Caco-2 (cell line): ENCODE measurements at regions of chr6 and their contacts with region 1.

Region 1: DNA sequence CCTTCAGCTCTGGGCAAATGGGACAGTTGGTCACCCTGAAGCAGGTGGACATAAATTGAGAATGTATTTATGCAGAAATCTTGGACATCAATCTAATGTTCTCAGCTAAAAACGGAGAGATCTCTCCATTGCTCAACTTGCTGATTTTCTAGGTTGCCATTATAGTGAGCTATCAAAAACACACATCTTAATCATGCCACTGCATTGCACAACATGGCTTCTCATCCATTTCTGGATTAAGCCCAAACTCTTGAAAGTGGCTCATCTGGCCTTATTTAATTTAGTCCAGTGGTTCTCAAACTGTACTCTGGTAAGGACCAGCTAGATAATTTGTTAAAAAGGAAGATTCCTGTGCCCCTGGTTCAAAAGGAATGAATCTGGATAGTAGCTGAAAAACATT is 324.9 kb upstream of the CITED2 start:
- DNase-seq: no peak
- H3K4me3 ChIP-seq: no peak overlapping the region
- H3K4me3 Mint-ChIP-seq: no peak overlapping the region
- H3K27ac Mint-ChIP-seq: no peak overlapping the region
- H3K4me1 ChIP-seq: peaks cover 7% of the 10 kb centered on the region
- H3K4me1 Mint-ChIP-seq: peaks cover 7% of the 10 kb centered on the region
- H3K27me3 ChIP-seq: no peaks in the 10 kb centered on the region
- H3K27me3 Mint-ChIP-seq: no peaks in the 10 kb centered on the region
- CTCF ChIP-seq: no peak

Region 2: DNA sequence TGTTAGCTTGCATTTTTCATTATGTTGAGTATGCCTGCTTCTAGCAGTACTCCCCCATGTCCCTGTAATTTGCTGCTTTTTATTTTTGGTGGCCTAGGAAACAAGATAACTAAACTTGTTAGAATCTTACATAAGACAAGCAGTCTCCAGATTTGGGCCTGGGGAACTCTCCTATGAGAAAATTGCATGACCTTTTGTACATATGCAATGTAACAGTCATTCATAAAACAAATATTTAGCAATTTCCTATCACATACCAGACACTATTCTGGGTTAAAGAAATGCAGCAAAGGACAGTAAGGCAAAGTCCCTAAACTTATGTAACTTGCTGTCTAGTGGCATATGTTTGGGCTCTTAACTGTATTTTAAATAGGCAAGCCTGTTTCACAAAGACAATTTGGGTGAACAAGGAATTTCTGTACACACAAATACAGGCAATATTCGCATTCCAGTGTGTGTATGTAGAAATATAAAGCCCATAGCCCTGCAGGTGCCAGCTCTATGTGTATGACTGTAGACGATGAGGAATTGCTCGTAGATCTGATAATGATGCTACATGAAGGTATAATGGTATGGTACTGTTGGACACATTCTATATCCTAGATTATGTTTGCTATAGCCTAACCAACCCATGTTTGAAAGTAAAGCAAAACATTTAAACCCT is 19.7 kb before region 1 on chr6:
- CTCF ChIA-PET with region 1: no interaction called
- POLR2A ChIA-PET with region 1: no interaction called
- intact Hi-C with region 1: loop called (anchors 2 kb)
- DNase-seq: peak in 1 of 2 experiments; percentile 27
- H3K4me3 ChIP-seq: no peak overlapping the region
- H3K4me3 Mint-ChIP-seq: no peak overlapping the region
- H3K27ac Mint-ChIP-seq: peak overlapping the region; percentile 64
- H3K4me1 ChIP-seq: peaks cover 23% of the 10 kb centered on the region
- H3K4me1 Mint-ChIP-seq: peaks cover 6% of the 10 kb centered on the region
- H3K27me3 ChIP-seq: no peaks in the 10 kb centered on the region
- H3K27me3 Mint-ChIP-seq: no peaks in the 10 kb centered on the region
- CTCF ChIP-seq: no peak

Region 3: DNA sequence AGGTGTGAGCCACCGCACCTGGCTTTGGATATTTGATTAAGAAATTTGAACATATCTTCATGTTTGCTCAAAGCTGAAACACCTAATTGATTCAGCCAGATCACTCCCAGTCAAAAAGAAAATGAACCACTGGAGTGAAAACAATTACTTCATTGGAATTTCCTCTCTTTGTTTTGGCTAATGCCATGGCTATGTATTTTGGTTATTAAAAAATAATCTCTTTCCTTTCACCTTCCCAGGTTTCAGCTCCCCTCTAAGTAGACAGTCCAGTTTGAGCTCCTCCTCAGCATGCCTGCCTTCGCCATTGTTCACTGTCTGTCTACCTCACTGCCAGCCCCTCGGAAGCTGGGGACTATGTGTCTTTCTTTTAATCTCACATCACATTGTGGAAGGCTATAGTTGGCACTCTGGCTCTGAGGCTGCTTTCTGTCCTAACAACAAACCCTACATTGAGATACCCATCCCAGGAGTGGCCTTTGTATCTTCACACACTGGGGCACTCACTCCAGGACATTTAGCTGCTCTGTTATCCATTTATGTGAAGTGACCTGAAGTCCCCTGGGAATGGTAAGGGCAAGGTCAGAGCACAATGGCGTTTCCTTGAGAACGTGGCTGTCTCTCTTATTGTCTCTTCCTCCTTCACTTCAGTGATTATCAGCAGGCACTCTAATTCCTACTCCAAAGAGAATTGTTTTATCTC is 439.1 kb after region 1 on chr6:
- CTCF ChIA-PET with region 1: no interaction called
- POLR2A ChIA-PET with region 1: no interaction called
- intact Hi-C with region 1: no loop called
- DNase-seq: no peak
- H3K4me3 ChIP-seq: no peak overlapping the region
- H3K4me3 Mint-ChIP-seq: no peak overlapping the region
- H3K27ac Mint-ChIP-seq: no peak overlapping the region
- H3K4me1 ChIP-seq: no peaks in the 10 kb centered on the region
- H3K4me1 Mint-ChIP-seq: peaks cover 6% of the 10 kb centered on the region
- H3K27me3 ChIP-seq: no peaks in the 10 kb centered on the region
- H3K27me3 Mint-ChIP-seq: no peaks in the 10 kb centered on the region
- CTCF ChIP-seq: no peak